CD8-positive, alpha-beta T cell (primary cell): ENCODE measurements at regions of chr21 and their contacts with region 1.

Region 1: DNA sequence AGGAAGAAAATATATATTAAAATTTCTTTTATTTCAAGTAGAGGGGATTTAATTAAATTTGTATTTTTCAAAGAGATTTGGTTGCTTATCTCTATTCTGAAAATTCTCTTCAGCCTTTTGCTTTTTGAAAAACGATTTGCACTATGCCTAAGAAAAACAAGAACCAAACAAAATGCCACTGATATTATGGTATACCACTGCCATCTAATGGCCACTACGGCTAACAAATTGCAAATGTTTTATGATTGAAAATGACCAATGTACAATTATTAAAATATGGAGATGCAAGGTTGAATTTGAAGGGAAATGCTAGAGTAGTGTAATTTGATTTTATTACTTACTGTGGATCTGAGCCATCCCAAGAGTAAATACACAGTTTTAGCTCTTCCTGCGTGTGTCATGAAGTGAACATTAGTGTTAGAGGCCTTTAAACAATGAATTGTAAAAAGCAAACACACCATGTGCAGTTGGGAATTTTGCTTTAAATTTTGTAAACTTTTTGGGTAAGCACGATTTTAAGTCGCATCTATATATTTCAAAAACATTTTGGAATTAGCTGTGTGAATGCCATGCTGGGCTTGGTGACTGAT is 137.4 kb upstream of the USP25 start:
- DNase-seq: peak in 2 of 9 experiments; percentile 54 to 64
- ATAC-seq: no peak
- H3K4me3 ChIP-seq: no peak overlapping the region
- H3K4me3 Mint-ChIP-seq: no peak overlapping the region
- H3K27ac ChIP-seq: no peak overlapping the region
- H3K27ac Mint-ChIP-seq: no peak overlapping the region
- H3K4me1 ChIP-seq: no peaks in the 10 kb centered on the region
- H3K4me1 Mint-ChIP-seq: no peaks in the 10 kb centered on the region
- H3K27me3 ChIP-seq: no peaks in the 10 kb centered on the region
- H3K27me3 Mint-ChIP-seq: peaks cover 5% of the 10 kb centered on the region
- CTCF ChIP-seq: peak; percentile 65

Region 2: GRCh38 chr21:14251336-14251735 is 1341.0 kb before region 1 on chr21:
- CTCF ChIA-PET with region 1: no interaction called
- POLR2A ChIA-PET with region 1: no interaction called
- intact Hi-C with region 1: loop called in 1 of 2 experiments (anchors 2 kb)
- DNase-seq: no peak
- ATAC-seq: no peak
- H3K4me3 ChIP-seq: no peak overlapping the region
- H3K4me3 Mint-ChIP-seq: no peak overlapping the region
- H3K27ac ChIP-seq: no peak overlapping the region
- H3K27ac Mint-ChIP-seq: no peak overlapping the region
- H3K4me1 ChIP-seq: no peaks in the 10 kb centered on the region
- H3K4me1 Mint-ChIP-seq: peaks cover 4% of the 10 kb centered on the region
- H3K27me3 ChIP-seq: no peaks in the 10 kb centered on the region
- H3K27me3 Mint-ChIP-seq: peaks cover 13% of the 10 kb centered on the region
- CTCF ChIP-seq: no peak

Region 3: GRCh38 chr21:14306151-14306907 is 1286.0 kb before region 1 on chr21:
- CTCF ChIA-PET with region 1: no interaction called
- POLR2A ChIA-PET with region 1: no interaction called
- intact Hi-C with region 1: loop called in 1 of 2 experiments (anchors 5 kb)
- DNase-seq: peak in 2 of 9 experiments; percentile 10 to 16
- ATAC-seq: no peak
- H3K4me3 ChIP-seq: no peak overlapping the region
- H3K4me3 Mint-ChIP-seq: no peak overlapping the region
- H3K27ac ChIP-seq: no peak overlapping the region
- H3K27ac Mint-ChIP-seq: no peak overlapping the region
- H3K4me1 ChIP-seq: no peaks in the 10 kb centered on the region
- H3K4me1 Mint-ChIP-seq: no peaks in the 10 kb centered on the region
- H3K27me3 ChIP-seq: no peaks in the 10 kb centered on the region
- H3K27me3 Mint-ChIP-seq: peaks cover 4% of the 10 kb centered on the region
- CTCF ChIP-seq: no peak

Region 4: GRCh38 chr21:14773777-14774345 is 818.5 kb before region 1 on chr21:
- CTCF ChIA-PET with region 1: no interaction called
- POLR2A ChIA-PET with region 1: no interaction called
- intact Hi-C with region 1: loop called in 1 of 2 experiments (anchors 10 kb)
- DNase-seq: peak; percentile 5 to 63 (median 50)
- ATAC-seq: no peak
- H3K4me3 ChIP-seq: no peak overlapping the region
- H3K4me3 Mint-ChIP-seq: no peak overlapping the region
- H3K27ac ChIP-seq: no peak overlapping the region
- H3K27ac Mint-ChIP-seq: no peak overlapping the region
- H3K4me1 ChIP-seq: no peaks in the 10 kb centered on the region
- H3K4me1 Mint-ChIP-seq: no peaks in the 10 kb centered on the region
- H3K27me3 ChIP-seq: no peaks in the 10 kb centered on the region
- H3K27me3 Mint-ChIP-seq: no peaks in the 10 kb centered on the region
- CTCF ChIP-seq: peak; percentile 64

Region 5: DNA sequence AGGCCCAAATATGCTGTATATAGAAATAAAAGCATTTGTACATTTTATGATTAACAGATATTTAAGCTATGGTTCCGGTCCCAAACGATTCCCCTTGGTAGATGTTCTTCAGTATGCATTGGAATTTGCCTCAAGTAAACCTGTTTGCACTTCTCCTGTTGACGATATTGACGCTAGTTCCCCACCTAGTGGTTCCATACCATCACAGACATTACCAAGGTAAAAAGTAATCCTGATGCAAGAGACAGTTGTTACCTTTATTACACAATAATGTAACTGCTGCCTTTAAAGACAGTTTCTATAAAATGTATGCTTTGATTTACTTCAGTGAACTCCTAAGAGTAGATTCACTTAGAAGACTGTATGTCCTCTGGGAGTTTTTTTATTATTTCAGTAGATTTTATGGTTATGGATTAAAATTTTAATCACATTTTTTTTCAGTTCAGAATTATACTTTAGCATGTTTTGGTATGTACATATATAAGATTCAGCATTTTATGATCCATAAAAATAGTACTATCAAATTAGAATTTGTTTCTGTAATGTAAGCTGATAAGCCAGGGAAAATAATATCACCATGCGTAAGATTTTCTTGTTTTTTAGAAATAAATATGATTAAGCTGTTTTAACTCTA is 233.9 kb after region 1 on chr21:
- CTCF ChIA-PET with region 1: no interaction called
- POLR2A ChIA-PET with region 1: no interaction called
- intact Hi-C with region 1: loop called in 1 of 2 experiments (anchors 1 kb)
- DNase-seq: peak in 4 of 9 experiments; percentile 23 to 75 (median 48)
- ATAC-seq: peak; percentile 75
- H3K4me3 ChIP-seq: no peak overlapping the region
- H3K4me3 Mint-ChIP-seq: no peak overlapping the region
- H3K27ac ChIP-seq: no peak overlapping the region
- H3K27ac Mint-ChIP-seq: peak overlapping the region; percentile 3
- H3K4me1 ChIP-seq: peaks cover 26% of the 10 kb centered on the region
- H3K4me1 Mint-ChIP-seq: peaks cover 52% of the 10 kb centered on the region
- H3K27me3 ChIP-seq: no peaks in the 10 kb centered on the region
- H3K27me3 Mint-ChIP-seq: no peaks in the 10 kb centered on the region
- CTCF ChIP-seq: peak; percentile 72